SK-N-SH (cell line): ENCODE measurements at regions of chr3 and their contacts with region 1.

Region 1: DNA sequence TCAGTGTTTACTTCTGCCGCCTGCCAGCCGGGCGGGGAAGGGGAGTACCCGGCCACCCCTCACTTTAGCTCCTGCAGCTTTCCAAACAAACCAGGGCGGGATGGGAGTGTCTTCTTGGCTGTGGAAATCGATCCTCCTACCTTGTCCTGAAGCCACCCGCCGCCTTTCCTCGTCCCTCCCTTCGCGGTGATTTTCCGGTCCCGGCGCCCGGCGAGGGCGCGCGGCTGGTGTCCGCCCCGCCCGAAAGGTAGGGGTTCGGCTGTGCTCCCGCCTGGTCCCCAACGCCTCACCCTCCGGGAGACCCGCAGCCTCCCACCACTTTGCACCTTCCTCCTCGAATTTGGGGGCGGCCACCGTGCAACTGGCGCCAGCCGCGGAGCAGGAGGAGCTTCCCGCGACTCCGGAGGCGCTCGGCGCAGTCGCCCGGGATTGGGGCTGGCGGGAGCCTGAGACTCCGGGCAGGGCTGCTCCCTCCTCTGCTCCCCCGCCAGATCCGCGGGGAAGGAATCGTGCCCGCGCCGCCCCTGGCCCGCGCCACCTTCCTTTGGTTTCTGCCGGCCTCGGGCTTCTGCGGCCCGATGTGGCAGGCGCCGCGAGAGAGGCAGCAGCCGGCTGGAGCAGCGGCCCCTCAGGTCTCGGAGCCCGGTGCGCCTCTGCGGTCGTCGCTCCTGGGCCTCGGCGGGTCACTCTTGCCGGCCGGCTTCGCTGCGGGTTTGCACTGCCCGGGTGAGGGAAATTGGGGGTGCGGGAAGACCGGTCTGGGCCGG is 30.7 kb upstream of the ST3GAL6 start:
- DNase-seq: peak; percentile 79
- H3K4me3 ChIP-seq: peak overlapping the region; percentile 84 to 86
- H3K27ac ChIP-seq: peak overlapping the region; percentile 60 to 98
- H3K4me1 ChIP-seq: peaks cover 5 to 28% of the 10 kb centered on the region in 2 experiments; a peak in 3 of 4 replicates
- H3K27me3 ChIP-seq: no peaks in the 10 kb centered on the region
- CTCF ChIP-seq: no peak
- EP300 ChIP-seq: no peak
- RAD21 ChIP-seq: no peak

Region 2: GRCh38 chr3:98623572-98624280 is 108.7 kb before region 1 on chr3:
- CTCF ChIA-PET with region 1: no interaction called
- POLR2A ChIA-PET with region 1: no interaction called
- DNase-seq: no peak
- H3K4me3 ChIP-seq: no peak overlapping the region
- H3K27ac ChIP-seq: no peak overlapping the region
- H3K4me1 ChIP-seq: no peaks in the 10 kb centered on the region
- H3K27me3 ChIP-seq: no peaks in the 10 kb centered on the region
- CTCF ChIP-seq: no peak
- EP300 ChIP-seq: no peak
- RAD21 ChIP-seq: no peak

Region 3: DNA sequence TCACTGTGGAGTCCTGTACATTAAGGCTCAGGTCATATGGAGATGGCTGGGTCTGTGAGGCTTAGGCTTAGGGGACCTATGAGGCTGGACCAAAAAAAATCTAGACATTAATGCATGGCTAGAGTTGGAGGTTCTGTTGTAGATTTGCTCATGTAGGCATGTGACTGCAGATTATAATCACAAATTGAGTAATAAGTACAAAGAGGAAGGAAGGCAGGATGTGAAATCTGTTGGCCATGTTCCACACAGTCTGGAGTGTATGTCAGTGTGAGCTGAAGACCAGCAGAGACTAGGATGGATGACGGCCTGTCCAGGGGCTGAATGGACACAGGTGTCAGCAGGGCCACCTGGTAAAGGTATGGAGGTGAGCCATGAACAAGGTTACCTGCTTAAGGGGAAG is 30.6 kb after region 1 on chr3 and contains the start of gene ST3GAL6:
- CTCF ChIA-PET with region 1: interaction called, 3 read pairs
- POLR2A ChIA-PET with region 1: interaction called, 50 read pairs
- DNase-seq: peak; percentile 40
- H3K4me3 ChIP-seq: peak within 1 kb of the TSS in 1 of 2 experiments; percentile 32; a peak in 2 of 4 replicates
- H3K27ac ChIP-seq: peak within 1 kb of the TSS; percentile 43 to 92; a peak in 3 of 4 replicates
- H3K4me1 ChIP-seq: peaks cover 19 to 55% of the 10 kb centered on the region in 2 experiments
- H3K27me3 ChIP-seq: no peaks in the 10 kb centered on the region
- CTCF ChIP-seq: no peak
- EP300 ChIP-seq: peak in 1 of 2 experiments; percentile 85; a peak in 2 of 4 replicates
- RAD21 ChIP-seq: peak; percentile 22; the same call in 1 of the 2 replicates
- polyA plus RNA-seq, gene ST3GAL6: 16.3 and 17.9 TPM in 2 replicates

Region 4: GRCh38 chr3:98869391-98869790 is 136.9 kb after region 1 on chr3:
- CTCF ChIA-PET with region 1: no interaction called
- POLR2A ChIA-PET with region 1: no interaction called
- DNase-seq: no peak
- H3K4me3 ChIP-seq: no peak overlapping the region
- H3K27ac ChIP-seq: peak overlapping the region in 1 of 2 experiments; percentile 16; a peak in 1 of 4 replicates
- H3K4me1 ChIP-seq: peaks cover 0 to 4% of the 10 kb centered on the region in 2 experiments; a peak in 1 of 4 replicates
- H3K27me3 ChIP-seq: no peaks in the 10 kb centered on the region
- CTCF ChIP-seq: no peak
- EP300 ChIP-seq: no peak
- RAD21 ChIP-seq: no peak